ENCODE measurements at regions of chr1 and their contacts with region 1.

Region 1: GRCh38 chr1:206700445-206701036 is 15.8 kb downstream of the MAPKAPK2 start:
- DNase-seq: no peak
- ATAC-seq: no peak
- H3K4me3 ChIP-seq: no peak overlapping the region
- H3K27ac ChIP-seq: no peak overlapping the region
- H3K4me1 ChIP-seq: peaks cover 5% of the 10 kb centered on the region
- H3K27me3 ChIP-seq: no peaks in the 10 kb centered on the region
- CTCF ChIP-seq: no peak

Region 2: GRCh38 chr1:206649261-206649921 is 51.1 kb before region 1 on chr1:
- CTCF ChIA-PET with region 1: no interaction called
- POLR2A ChIA-PET with region 1: interaction called, 12 read pairs
- in situ Hi-C with region 1: no loop called
- intact Hi-C with region 1: no loop called
- DNase-seq: no peak
- ATAC-seq: no peak
- H3K4me3 ChIP-seq: no peak overlapping the region
- H3K27ac ChIP-seq: no peak overlapping the region
- H3K4me1 ChIP-seq: no peaks in the 10 kb centered on the region
- H3K27me3 ChIP-seq: no peaks in the 10 kb centered on the region
- CTCF ChIP-seq: no peak

Measured in Panc1 (cell line).